HCT116 (cell line): ENCODE measurements at regions of chr5 and their contacts with region 1.

Region 1: GRCh38 chr5:161966564-161966963 is 101.0 kb upstream of the GABRG2 start:
- DNase-seq: no peak
- ATAC-seq: peak; percentile 50
- H3K4me3 ChIP-seq: no peak overlapping the region
- H3K27ac ChIP-seq: no peak overlapping the region
- H3K4me1 ChIP-seq: no peaks in the 10 kb centered on the region
- H3K27me3 ChIP-seq: no peaks in the 10 kb centered on the region
- CTCF ChIP-seq: peak in 2 of 3 experiments; percentile 17 to 25; a peak in 1 of 6 replicates
- POLR2A ChIP-seq: no peak
- RAD21 ChIP-seq: peak; percentile 44

Region 2: GRCh38 chr5:161691911-161692310 is 274.7 kb before region 1 on chr5:
- CTCF ChIA-PET with region 1: no interaction called
- POLR2A ChIA-PET with region 1: no interaction called
- RAD21 ChIA-PET with region 1: no interaction called
- intact Hi-C with region 1: no loop called
- DNase-seq: no peak
- ATAC-seq: no peak
- H3K4me3 ChIP-seq: no peak overlapping the region
- H3K27ac ChIP-seq: no peak overlapping the region
- H3K4me1 ChIP-seq: no peaks in the 10 kb centered on the region
- H3K27me3 ChIP-seq: no peaks in the 10 kb centered on the region
- CTCF ChIP-seq: no peak
- POLR2A ChIP-seq: no peak
- RAD21 ChIP-seq: no peak

Region 3: DNA sequence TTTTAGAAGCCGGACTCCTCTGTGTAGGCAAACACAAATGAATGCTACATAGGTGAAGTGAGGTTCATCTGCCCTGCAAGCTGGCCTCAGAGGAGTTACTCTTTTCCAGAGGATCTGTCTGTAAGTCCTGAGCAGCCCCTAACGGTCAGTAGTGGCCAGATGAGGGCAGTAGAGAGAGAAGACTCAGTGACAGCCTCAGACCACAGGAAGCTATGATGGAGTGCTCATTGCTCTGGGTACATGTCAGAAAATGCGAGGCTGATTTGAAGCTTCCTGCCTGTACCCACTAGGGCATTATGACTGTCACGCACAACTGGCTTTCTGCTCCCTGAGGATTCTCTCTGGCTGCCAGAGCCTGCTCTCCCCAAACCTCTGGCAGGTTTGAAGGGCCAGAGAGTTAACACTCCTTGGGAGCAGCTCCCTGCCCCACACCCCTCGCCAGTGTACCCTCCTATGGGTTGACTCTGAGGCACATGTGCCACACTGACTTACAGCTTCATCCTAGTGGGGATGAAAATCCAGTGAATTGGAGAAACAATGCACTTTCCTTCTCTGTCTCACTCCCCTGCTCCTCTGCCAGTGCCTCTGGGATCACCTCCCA is 242.5 kb after region 1 on chr5:
- CTCF ChIA-PET with region 1: interaction called, 7 read pairs
- POLR2A ChIA-PET with region 1: no interaction called
- RAD21 ChIA-PET with region 1: no interaction called
- intact Hi-C with region 1: loop called (anchors 2 kb)
- DNase-seq: peak; percentile 24
- ATAC-seq: peak; percentile 96
- H3K4me3 ChIP-seq: no peak overlapping the region
- H3K27ac ChIP-seq: no peak overlapping the region
- H3K4me1 ChIP-seq: no peaks in the 10 kb centered on the region
- H3K27me3 ChIP-seq: no peaks in the 10 kb centered on the region
- CTCF ChIP-seq: peak in 2 of 3 experiments; percentile 56 to 64; a peak in 4 of 6 replicates
- POLR2A ChIP-seq: no peak
- RAD21 ChIP-seq: peak; percentile 31

Region 4: DNA sequence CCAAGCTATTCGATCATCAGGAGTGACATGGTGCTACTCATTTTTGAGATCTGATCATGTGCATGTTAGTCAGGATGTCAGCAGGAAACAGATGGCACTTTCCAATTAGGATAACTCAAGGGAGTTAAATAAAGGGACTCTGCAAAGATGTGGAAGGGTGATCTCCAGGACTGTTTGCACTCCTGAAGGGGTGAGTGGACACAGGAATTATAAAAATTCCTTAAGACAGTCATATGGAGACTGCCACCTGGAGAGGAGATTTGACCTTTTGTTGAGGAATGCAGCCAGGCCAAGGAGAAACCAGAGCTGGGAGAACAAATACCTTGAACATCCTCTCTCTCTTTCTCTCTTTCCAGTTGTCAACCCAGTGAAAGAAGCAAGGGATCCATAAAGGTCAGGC is 290.1 kb after region 1 on chr5:
- CTCF ChIA-PET with region 1: no interaction called
- POLR2A ChIA-PET with region 1: no interaction called
- RAD21 ChIA-PET with region 1: no interaction called
- intact Hi-C with region 1: no loop called
- DNase-seq: no peak
- ATAC-seq: no peak
- H3K4me3 ChIP-seq: no peak overlapping the region
- H3K27ac ChIP-seq: no peak overlapping the region
- H3K4me1 ChIP-seq: no peaks in the 10 kb centered on the region
- H3K27me3 ChIP-seq: no peaks in the 10 kb centered on the region
- CTCF ChIP-seq: no peak
- POLR2A ChIP-seq: no peak
- RAD21 ChIP-seq: no peak